A673 (cell line): ENCODE measurements at regions of chr21 and their contacts with region 1.

Region 1: GRCh38 chr21:40235513-40235912 is 368.3 kb downstream of the PCP4 start:
- DNase-seq: no peak
- H3K4me3 ChIP-seq: no peak overlapping the region
- H3K27ac ChIP-seq: no peak overlapping the region
- H3K4me1 ChIP-seq: no peaks in the 10 kb centered on the region
- H3K27me3 ChIP-seq: no peaks in the 10 kb centered on the region
- CTCF ChIP-seq: no peak

Region 2: GRCh38 chr21:40299462-40299861 is 63.9 kb after region 1 on chr21:
- CTCF ChIA-PET with region 1: no interaction called
- POLR2A ChIA-PET with region 1: no interaction called
- intact Hi-C with region 1: loop called (anchors 10 kb)
- DNase-seq: no peak
- H3K4me3 ChIP-seq: no peak overlapping the region
- H3K27ac ChIP-seq: no peak overlapping the region
- H3K4me1 ChIP-seq: no peaks in the 10 kb centered on the region
- H3K27me3 ChIP-seq: no peaks in the 10 kb centered on the region
- CTCF ChIP-seq: no peak